Activated T-helper 2 cell treated with anti-CD3 and anti-CD28 coated beads, Interferon-gamma antibody, Interleukin-2, Interleukin-4, amounts not matched to agents 10 μg/mL and 5 μg/mL and 100 μg/mL, durations not matched to agents 14 hours and 24 hours and 36 hours (primary cell): ENCODE measurements at regions of chr20 and their contacts with region 1.

Region 1: DNA sequence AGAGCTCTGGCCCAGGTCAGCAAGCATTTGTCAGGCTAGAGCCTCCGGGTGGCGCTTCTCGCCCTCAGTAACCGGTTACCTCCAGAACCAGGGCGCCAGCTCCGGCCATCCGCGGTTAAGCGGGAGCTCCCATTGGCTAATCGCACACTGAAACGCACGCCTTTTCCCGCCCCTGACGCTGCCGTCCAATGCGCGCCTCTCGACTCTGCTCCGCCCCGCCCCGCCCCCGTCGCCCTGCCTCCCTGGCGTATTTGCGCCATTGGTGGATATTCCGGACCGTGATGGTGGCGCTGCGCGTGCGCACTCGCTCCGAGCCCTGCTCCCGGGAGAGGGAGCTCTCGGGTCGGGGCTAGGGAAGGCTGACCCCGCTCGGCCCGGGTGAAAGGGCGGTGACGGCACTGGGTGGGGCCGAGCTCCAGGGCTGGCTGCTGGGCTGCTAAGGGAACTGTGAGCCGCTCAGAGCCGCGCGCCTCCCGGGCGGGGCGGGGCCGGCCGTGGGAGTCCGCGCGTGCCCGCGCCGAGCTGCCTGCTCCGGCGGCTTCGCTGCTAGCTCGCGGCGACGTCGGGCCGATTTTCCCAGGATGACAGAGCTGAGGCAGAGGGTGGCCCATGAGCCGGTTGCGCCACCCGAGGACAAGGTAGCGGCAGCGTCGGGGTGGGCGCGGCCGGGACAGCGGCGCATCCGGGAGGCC is at the start of gene CDS2:
- DNase-seq: peak; percentile 100
- H3K4me3 Mint-ChIP-seq: peak within 1 kb of the TSS; percentile 96
- H3K27ac Mint-ChIP-seq: peak within 1 kb of the TSS; percentile 96
- H3K4me1 Mint-ChIP-seq: peaks cover 39% of the 10 kb centered on the region
- H3K27me3 Mint-ChIP-seq: no peaks in the 10 kb centered on the region
- total RNA-seq, gene CDS2: 41.4 and 47.7 TPM in 2 replicates

Region 2: DNA sequence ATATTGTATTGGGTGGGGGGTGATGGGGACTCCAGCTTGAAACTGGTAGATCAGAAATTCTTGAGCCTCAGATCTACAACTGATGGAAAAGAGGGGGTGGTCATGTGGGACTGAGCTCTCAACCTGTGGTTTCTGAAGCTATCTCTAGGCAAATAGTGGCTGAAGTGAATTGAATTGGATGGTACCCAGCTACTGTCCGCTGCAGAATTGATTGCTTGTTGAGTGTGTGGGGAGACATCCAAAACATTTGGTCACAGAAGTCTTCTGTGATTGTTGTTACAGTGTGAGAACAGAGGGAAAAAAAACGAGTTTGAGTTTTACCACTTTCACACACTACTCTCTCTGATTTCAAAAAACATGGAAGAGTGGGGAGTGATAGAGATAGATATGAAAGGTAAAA is 15.0 kb after region 1 on chr20:
- intact Hi-C with region 1: no loop called
- DNase-seq: no peak
- H3K4me3 Mint-ChIP-seq: no peak overlapping the region
- H3K27ac Mint-ChIP-seq: no peak overlapping the region
- H3K4me1 Mint-ChIP-seq: peaks cover 31% of the 10 kb centered on the region
- H3K27me3 Mint-ChIP-seq: no peaks in the 10 kb centered on the region

Region 3: GRCh38 chr20:5191829-5192569 is 65.3 kb after region 1 on chr20:
- intact Hi-C with region 1: loop called (anchors 1 kb)
- DNase-seq: no peak
- H3K4me3 Mint-ChIP-seq: no peak overlapping the region
- H3K27ac Mint-ChIP-seq: peak overlapping the region; percentile 72
- H3K4me1 Mint-ChIP-seq: peaks cover 11% of the 10 kb centered on the region
- H3K27me3 Mint-ChIP-seq: no peaks in the 10 kb centered on the region

Region 4: GRCh38 chr20:5353624-5354496 is 227.2 kb after region 1 on chr20:
- intact Hi-C with region 1: loop called (anchors 10 kb)
- DNase-seq: no peak
- H3K4me3 Mint-ChIP-seq: no peak overlapping the region
- H3K27ac Mint-ChIP-seq: peak overlapping the region; percentile 60
- H3K4me1 Mint-ChIP-seq: peaks cover 29% of the 10 kb centered on the region
- H3K27me3 Mint-ChIP-seq: no peaks in the 10 kb centered on the region

Region 5: DNA sequence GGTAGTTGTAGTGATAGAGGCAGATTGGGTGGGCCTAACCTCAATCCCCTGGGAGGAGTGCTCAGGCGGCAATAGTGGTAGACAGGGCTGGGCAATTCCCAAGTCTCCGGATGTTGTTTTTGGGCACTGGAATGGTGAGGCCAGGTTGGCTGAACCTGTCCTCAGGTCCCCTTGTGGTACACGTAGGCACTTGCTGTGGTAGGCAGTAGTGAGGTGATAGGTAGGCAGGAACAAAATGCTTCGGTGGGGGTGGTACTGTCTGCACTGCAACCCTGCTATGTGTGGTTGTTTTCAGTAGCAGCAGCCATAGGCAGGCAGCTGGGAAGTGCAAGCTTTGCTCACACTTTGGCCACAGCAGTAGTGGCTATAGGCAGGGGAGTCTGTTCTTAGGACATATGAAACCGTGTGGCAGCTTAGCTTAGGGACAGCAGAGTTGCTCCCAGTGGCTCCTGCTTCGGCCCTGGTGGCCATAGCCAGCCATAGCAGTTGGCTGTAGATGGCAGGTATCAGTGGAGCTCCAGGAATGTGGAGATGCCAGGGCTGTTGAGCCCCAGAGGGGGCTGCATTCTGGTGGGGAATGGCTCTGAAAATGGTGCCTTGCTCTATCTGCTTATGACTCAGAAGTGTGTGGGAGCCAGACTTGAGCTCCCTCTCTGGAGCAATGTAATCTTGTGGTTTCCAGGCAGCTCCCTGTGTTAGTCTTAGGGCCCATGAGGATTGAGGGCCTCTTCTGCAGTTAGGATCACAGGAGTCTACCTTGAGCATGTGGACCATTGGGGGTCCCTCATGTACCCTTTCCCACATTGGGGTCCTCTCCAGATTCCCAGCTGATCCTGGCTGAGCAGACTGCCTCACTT is 1399.0 kb after region 1 on chr20:
- intact Hi-C with region 1: no loop called
- DNase-seq: no peak
- H3K4me3 Mint-ChIP-seq: no peak overlapping the region
- H3K27ac Mint-ChIP-seq: no peak overlapping the region
- H3K4me1 Mint-ChIP-seq: no peaks in the 10 kb centered on the region
- H3K27me3 Mint-ChIP-seq: no peaks in the 10 kb centered on the region